ENCODE measurements at regions of chr1 and their contacts with region 1.

Region 1: GRCh38 chr1:115706587-115707425 is 61.7 kb downstream of the CASQ2 start:
- DNase-seq: peak; percentile 57
- H3K4me3 Mint-ChIP-seq: no peak overlapping the region
- H3K27ac Mint-ChIP-seq: no peak overlapping the region
- H3K4me1 Mint-ChIP-seq: no peaks in the 10 kb centered on the region
- H3K27me3 Mint-ChIP-seq: peaks cover 10% of the 10 kb centered on the region
- CTCF ChIP-seq: peak; percentile 67

Region 2: GRCh38 chr1:115642168-115643072 is 64.4 kb before region 1 on chr1:
- CTCF ChIA-PET with region 1: interaction called, 17 read pairs
- POLR2A ChIA-PET with region 1: interaction called, 6 read pairs
- intact Hi-C with region 1: loop called (anchors 1 kb)
- DNase-seq: peak; percentile 52
- H3K4me3 Mint-ChIP-seq: peak overlapping the region; percentile 68
- H3K27ac Mint-ChIP-seq: peak overlapping the region; percentile 59
- H3K4me1 Mint-ChIP-seq: peaks cover 13% of the 10 kb centered on the region
- H3K27me3 Mint-ChIP-seq: peaks cover 13% of the 10 kb centered on the region
- CTCF ChIP-seq: no peak

Region 3: GRCh38 chr1:115679141-115679611 is 27.6 kb before region 1 on chr1:
- CTCF ChIA-PET with region 1: interaction called, 13 read pairs
- POLR2A ChIA-PET with region 1: no interaction called
- intact Hi-C with region 1: no loop called
- DNase-seq: peak; percentile 81
- H3K4me3 Mint-ChIP-seq: peak overlapping the region; percentile 44
- H3K27ac Mint-ChIP-seq: peak overlapping the region; percentile 68
- H3K4me1 Mint-ChIP-seq: peaks cover 18% of the 10 kb centered on the region
- H3K27me3 Mint-ChIP-seq: no peaks in the 10 kb centered on the region
- CTCF ChIP-seq: no peak

Region 4: GRCh38 chr1:115692224-115692623 is 14.6 kb before region 1 on chr1:
- CTCF ChIA-PET with region 1: interaction called, 10 read pairs
- POLR2A ChIA-PET with region 1: interaction called, 3 read pairs
- intact Hi-C with region 1: no loop called
- DNase-seq: no peak
- H3K4me3 Mint-ChIP-seq: no peak overlapping the region
- H3K27ac Mint-ChIP-seq: no peak overlapping the region
- H3K4me1 Mint-ChIP-seq: no peaks in the 10 kb centered on the region
- H3K27me3 Mint-ChIP-seq: no peaks in the 10 kb centered on the region
- CTCF ChIP-seq: no peak

Region 5: DNA sequence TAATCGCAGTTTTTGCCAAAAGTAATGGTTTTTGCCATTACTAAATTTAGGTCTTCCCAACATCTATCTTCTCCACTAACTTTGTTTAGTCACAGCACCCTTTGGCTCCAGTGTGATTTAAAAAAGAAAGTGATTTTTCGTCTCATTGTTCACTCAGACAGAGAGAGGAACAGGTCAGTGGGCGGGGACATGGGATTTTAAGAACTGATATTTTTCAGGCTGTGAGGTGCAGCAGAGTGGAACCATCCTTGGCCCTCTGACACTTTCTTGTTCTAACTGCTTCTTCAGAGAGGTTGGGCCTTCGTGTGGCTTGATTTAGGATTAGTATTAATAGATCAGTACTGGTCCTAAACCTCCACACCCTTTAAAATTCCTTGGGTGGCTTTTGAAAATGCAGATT is 22.9 kb after region 1 on chr1:
- CTCF ChIA-PET with region 1: interaction called, 24 read pairs
- POLR2A ChIA-PET with region 1: no interaction called
- intact Hi-C with region 1: no loop called
- DNase-seq: no peak
- H3K4me3 Mint-ChIP-seq: no peak overlapping the region
- H3K27ac Mint-ChIP-seq: no peak overlapping the region
- H3K4me1 Mint-ChIP-seq: peaks cover 17% of the 10 kb centered on the region
- H3K27me3 Mint-ChIP-seq: no peaks in the 10 kb centered on the region
- CTCF ChIP-seq: no peak

Region 6: DNA sequence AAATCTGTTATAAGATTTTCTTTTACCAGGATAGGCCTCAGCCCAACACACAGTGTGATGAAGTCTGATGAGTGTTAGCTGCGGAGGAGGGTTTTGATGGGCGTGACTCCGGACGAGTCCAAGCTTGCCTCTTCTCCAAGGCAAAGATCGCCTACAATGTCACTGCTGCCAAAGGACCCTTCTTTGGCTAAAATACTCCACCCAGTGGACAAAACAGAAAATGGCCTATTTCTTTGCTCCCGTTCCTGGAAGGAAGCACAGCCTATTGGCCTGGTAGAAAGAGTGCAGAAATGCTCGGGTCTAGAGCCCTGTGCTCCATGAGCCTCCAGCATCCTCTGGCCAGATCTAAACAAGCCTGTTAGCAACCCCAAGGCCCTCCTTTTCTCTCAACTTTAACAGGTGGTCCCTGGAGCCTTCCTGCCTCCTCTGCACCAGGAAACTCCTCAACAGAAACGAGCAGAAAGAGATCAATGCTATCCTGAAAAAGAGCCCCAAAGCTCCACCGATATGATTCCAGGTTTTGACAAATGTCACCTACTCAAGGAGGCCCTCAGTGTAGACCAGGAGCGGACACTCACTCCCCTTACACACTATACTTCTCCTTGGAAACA is 65.1 kb after region 1 on chr1:
- CTCF ChIA-PET with region 1: interaction called, 33 read pairs
- POLR2A ChIA-PET with region 1: interaction called, 3 read pairs
- intact Hi-C with region 1: no loop called
- DNase-seq: peak; percentile 94
- H3K4me3 Mint-ChIP-seq: no peak overlapping the region
- H3K27ac Mint-ChIP-seq: peak overlapping the region; percentile 49
- H3K4me1 Mint-ChIP-seq: peaks cover 16% of the 10 kb centered on the region
- H3K27me3 Mint-ChIP-seq: no peaks in the 10 kb centered on the region
- CTCF ChIP-seq: peak; percentile 70

Measured in MCF 10A (cell line).